ENCODE measurements at regions of chr10 and their contacts with region 1.

Region 1: GRCh38 chr10:9175200-9175599 is 1120.7 kb downstream of the GATA3 start:
- DNase-seq: no peak
- ATAC-seq: no peak
- H3K4me3 ChIP-seq: no peak overlapping the region
- H3K27ac ChIP-seq: no peak overlapping the region
- H3K4me1 ChIP-seq: no peaks in the 10 kb centered on the region
- H3K27me3 ChIP-seq: peaks cover 0 to 4% (median 0%) of the 10 kb centered on the region in 9 donors
- CTCF ChIP-seq: no peak
- POLR2A ChIP-seq: no peak

Region 2: GRCh38 chr10:9227679-9228365 is 52.6 kb after region 1 on chr10:
- intact Hi-C with region 1: loop called in 1 of 10 experiments (anchors 2 kb)
- DNase-seq: no peak
- ATAC-seq: no peak
- H3K4me3 ChIP-seq: no peak overlapping the region
- H3K27ac ChIP-seq: no peak overlapping the region
- H3K4me1 ChIP-seq: no peaks in the 10 kb centered on the region
- H3K27me3 ChIP-seq: peaks cover 0 to 23% (median 3%) of the 10 kb centered on the region in 9 donors
- CTCF ChIP-seq: no peak
- POLR2A ChIP-seq: no peak

Region 3: DNA sequence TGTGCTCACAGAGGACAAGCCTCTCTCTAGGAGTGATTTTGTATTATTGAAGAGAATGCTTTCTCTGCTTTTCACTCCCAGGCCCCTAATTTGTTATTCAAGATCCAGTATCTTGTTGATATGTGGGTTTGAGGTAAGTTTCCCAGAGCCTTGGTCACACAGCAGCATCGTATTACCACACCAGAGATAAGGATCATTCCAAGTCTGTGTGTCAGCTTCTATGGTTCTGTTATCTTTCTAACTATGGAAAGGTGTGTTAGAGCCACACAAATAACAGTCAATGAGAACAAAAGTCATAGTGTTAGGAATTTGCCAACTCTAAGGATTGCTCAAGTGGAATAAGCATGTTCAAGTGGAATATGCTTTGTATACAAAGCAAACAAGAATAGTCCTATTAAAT is 87.6 kb after region 1 on chr10:
- intact Hi-C with region 1: no loop called
- DNase-seq: no peak
- ATAC-seq: no peak
- H3K4me3 ChIP-seq: no peak overlapping the region
- H3K27ac ChIP-seq: no peak overlapping the region
- H3K4me1 ChIP-seq: no peaks in the 10 kb centered on the region
- H3K27me3 ChIP-seq: peaks cover 0 to 19% (median 2%) of the 10 kb centered on the region in 9 donors
- CTCF ChIP-seq: no peak
- POLR2A ChIP-seq: no peak